ENCODE measurements at regions of chr6 and their contacts with region 1.

Region 1: DNA sequence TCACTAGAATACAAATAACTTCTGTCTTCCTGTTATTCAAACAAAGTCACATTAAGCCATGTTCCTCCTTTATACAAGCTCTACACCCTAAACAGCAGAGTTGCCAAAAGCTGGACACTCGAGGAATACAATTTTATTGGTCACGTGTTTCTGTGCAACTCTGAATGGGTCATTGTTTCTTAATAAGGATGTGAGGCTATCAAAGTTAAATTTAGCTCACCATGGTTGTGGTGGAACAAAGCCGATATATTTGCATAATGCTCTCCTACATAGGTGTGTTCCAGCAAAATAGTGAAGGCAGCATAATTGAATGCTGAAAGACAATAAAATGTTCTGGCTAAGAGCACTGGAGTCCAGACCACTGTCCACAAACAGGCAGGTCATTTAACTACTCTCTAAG is 36.9 kb upstream of the CD2AP start:
- DNase-seq: peak; percentile 47
- ATAC-seq: peak; percentile 76
- H3K4me3 ChIP-seq: no peak overlapping the region; the same call in 1 of the 2 replicates
- H3K27ac ChIP-seq: 0 out of 2 replicates have a peak overlapping the region, but pooled peaks have one; percentile 32
- H3K4me1 ChIP-seq: peaks cover 36% of the 10 kb centered on the region
- H3K27me3 ChIP-seq: no peaks in the 10 kb centered on the region
- CTCF ChIP-seq: no peak
- EP300 ChIP-seq: no peak; a peak in 1 of 4 replicates
- POLR2A ChIP-seq: no peak
- RAD21 ChIP-seq: no peak

Region 2: DNA sequence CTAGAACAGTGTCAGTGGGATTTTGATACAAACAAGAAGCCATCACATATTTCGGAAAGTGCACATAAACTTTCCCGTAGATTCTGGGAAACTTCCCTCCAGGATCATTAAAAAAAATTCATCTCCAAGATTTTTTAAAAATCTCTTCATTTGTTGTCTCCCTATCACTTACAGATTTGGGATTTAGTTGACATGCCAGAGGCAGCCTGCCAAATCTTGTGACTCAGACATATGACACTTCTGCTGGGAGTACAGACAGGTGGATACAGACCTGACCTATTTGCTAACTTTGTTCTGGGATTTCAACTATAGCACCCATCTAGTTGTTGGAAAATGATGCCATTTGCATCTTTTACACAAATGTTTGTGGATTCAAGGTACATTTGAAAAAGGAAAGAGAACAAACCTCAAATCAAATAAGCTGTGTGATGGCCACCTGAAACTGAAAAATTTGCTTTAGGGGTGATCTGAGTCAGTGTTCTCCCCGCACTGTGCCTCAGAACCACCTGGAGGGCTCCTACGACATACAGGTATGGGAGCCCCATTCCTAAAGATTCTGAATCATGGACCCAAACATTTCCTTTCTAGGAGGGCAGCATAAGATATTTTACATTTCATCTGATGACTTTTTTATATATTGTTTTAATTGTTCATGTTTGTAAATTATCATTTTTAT is 15.0 kb after region 1 on chr6:
- CTCF ChIA-PET with region 1: no interaction called
- POLR2A ChIA-PET with region 1: interaction called, 3 read pairs
- RAD21 ChIA-PET with region 1: interaction called, 11 read pairs
- SMC1A ChIA-PET with region 1: interaction called, 12 read pairs
- in situ Hi-C with region 1: no loop called
- intact Hi-C with region 1: loop called (anchors 2 kb)
- DNase-seq: no peak
- ATAC-seq: peak; percentile 87
- H3K4me3 ChIP-seq: peak overlapping the region; percentile 13; the same call in 1 of the 2 replicates
- H3K27ac ChIP-seq: no peak overlapping the region
- H3K4me1 ChIP-seq: peaks cover 25% of the 10 kb centered on the region
- H3K27me3 ChIP-seq: no peaks in the 10 kb centered on the region
- CTCF ChIP-seq: no peak
- EP300 ChIP-seq: no peak
- POLR2A ChIP-seq: no peak
- RAD21 ChIP-seq: no peak

Measured in GM12878 (cell line).